ENCODE measurements at regions of chr1 and their contacts with region 1.

Region 1: DNA sequence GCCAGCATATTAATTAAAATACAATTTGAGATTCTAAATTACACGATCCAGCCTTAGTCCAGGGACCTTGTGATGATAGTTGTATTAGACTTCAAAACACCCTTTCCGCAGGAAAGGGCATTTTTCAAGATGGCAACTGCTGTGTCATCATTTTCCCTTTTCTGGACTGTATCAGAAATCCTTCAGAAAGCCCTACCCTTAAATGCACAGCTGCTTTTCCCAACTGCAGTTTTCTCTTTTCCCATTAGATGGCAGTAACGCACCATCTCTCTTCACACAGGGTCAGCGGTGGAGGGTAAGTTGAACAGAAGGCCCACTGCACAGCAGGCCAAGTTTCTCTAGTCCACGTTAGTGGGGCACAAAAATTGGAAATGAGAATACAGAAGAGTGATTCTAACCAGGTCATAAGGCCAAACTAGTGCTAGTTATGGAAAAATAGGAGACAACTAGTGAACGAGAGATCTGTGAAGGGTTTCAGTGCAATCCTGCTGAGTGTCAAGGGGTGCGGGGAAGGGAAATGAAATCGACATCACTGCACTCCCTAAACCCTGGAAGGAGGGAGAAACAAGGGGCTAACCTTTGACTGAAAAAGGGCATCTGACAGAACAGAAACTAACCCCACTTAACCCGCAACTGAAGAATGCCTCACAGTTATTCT is 22.1 kb upstream of the TDRD10 start:
- DNase-seq: peak in 1 of 2 donors; percentile 56
- ATAC-seq: peak; percentile 94
- H3K4me3 ChIP-seq: no peak overlapping the region
- H3K27ac ChIP-seq: no peak overlapping the region
- H3K4me1 ChIP-seq: no peaks in the 10 kb centered on the region
- H3K27me3 ChIP-seq: no peaks in the 10 kb centered on the region

Region 2: GRCh38 chr1:154352581-154353459 is 127.1 kb before region 1 on chr1:
- intact Hi-C with region 1: no loop called
- DNase-seq: peak; percentile 70 to 83
- ATAC-seq: peak; percentile 65
- H3K4me3 ChIP-seq: no peak overlapping the region
- H3K27ac ChIP-seq: peak overlapping the region in 1 of 2 donors; percentile 8
- H3K4me1 ChIP-seq: no peaks in the 10 kb centered on the region
- H3K27me3 ChIP-seq: no peaks in the 10 kb centered on the region

Region 3: GRCh38 chr1:154546264-154547063 is 66.6 kb after region 1 on chr1:
- intact Hi-C with region 1: loop called in 1 of 2 experiments (anchors 5 kb)
- DNase-seq: peak in 1 of 2 donors; percentile 66
- ATAC-seq: no peak
- H3K4me3 ChIP-seq: no peak overlapping the region
- H3K27ac ChIP-seq: no peak overlapping the region
- H3K4me1 ChIP-seq: no peaks in the 10 kb centered on the region
- H3K27me3 ChIP-seq: no peaks in the 10 kb centered on the region

Region 4: DNA sequence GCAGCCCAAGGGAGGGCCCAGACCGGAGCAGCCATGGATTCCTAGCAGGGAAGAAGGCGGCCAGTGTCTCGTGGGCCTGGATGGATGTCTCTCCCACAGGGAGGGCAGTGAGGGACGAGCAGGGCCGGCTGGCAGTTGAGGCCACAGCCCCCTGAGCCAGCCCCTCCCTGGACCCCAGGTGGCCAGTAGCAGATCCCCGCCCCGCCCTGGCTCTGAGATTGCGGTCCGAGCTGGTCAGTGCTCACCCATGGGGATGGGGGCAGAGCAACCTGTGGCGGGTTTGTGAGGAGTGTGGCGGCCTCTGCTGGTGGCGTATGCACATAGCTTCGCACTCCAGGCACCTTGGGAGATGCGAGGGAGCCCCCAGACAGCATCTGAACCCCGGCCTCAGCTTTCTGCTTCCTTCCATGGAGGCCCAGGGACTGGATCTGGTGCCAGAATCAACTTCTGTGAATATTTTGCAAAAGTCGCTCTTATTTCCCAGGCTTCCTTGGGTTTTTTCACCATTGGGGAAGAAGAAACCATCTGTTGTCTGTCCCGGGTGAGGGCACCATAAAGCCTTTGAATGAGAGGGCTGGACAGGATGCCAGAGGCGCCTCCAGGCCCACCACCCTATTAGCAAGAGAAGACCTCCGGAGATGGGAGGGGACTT is 398.6 kb after region 1 on chr1:
- intact Hi-C with region 1: loop called (anchors 5 kb)
- DNase-seq: peak; percentile 78 to 92
- ATAC-seq: peak; percentile 87
- H3K4me3 ChIP-seq: no peak overlapping the region
- H3K27ac ChIP-seq: no peak overlapping the region
- H3K4me1 ChIP-seq: no peaks in the 10 kb centered on the region
- H3K27me3 ChIP-seq: no peaks in the 10 kb centered on the region

Region 5: DNA sequence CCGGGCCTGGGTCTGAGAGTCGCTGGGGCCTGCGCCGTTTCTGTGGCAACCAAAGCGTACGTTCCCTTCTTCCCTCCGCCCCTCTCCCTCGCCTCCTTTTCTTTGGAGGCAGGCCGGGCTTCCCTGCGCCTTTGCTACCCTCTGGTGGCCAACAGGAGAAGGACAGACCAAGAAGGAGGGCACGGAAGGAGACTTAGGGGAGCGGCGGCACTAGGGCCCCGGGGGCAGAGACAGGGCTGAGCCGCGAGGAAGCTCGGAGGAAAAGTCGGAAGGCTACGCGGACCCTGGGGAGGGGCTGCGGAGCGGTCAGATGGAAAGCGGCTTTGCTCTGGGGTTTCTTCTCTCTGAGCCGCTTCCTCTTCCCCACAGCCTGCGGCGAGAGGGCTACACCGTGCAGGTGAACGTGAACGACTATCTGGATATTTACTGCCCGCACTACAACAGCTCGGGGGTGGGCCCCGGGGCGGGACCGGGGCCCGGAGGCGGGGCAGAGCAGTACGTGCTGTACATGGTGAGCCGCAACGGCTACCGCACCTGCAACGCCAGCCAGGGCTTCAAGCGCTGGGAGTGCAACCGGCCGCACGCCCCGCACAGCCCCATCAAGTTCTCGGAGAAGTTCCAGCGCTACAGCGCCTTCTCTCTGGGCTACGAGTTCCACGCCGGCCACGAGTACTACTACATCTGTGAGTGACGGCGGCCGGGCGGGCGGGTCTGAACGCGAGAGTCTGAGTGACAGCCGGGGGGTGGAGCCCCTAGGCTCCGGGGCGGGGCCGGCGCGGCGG is 605.0 kb after region 1 on chr1:
- intact Hi-C with region 1: loop called in 1 of 2 experiments (anchors 5 kb)
- DNase-seq: peak; percentile 96 to 97
- ATAC-seq: peak; percentile 94
- H3K4me3 ChIP-seq: peak overlapping the region; percentile 27 to 59
- H3K27ac ChIP-seq: peak overlapping the region in 1 of 2 donors; percentile 55
- H3K4me1 ChIP-seq: no peaks in the 10 kb centered on the region
- H3K27me3 ChIP-seq: no peaks in the 10 kb centered on the region